GM12878 (cell line): ENCODE measurements at regions of chr5 and their contacts with region 1.

Region 1: DNA sequence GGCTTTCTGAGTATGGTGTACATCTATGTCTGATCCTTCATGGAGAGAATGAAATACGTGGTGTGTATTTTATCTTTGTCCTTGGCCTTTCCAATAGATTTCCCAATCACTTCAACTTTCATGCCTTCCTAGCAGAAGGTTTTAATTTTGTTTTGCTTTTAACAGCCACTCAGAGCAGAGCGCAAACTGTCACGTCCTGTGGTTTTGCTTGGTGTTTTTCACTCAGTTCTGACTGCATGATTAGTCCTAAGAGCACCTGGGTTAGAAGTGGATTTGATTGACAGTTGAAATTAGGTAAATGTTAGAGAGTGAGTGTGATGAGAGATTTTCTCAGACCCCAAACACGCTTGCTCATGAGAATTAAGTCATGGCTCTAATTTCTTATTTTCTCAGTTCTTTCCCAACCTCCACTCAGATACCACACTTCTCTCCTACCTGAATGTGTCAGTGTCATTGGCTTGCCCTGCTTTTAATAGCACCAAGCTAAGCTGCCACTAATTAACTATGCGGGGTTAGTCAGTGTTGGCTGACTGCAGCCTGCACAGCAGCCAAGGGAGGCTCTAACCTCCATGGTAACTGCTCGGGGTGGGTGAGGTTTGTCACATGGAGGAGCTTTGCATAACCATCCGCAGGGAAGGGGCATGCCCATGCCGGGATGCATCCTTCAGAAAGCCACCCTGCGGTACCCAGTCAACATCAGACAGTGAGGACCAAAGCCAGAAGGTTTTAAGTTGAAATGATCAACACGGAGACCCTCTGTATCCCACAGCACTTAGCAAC is 173.4 kb downstream of the NR3C1 start:
- DNase-seq: peak; percentile 99
- ATAC-seq: peak; percentile 89
- H3K4me3 ChIP-seq: peak overlapping the region; percentile 34; the same call in 1 of the 2 replicates
- H3K27ac ChIP-seq: peak overlapping the region; percentile 90
- H3K4me1 ChIP-seq: peaks cover 29% of the 10 kb centered on the region
- H3K27me3 ChIP-seq: no peaks in the 10 kb centered on the region
- CTCF ChIP-seq: no peak
- EP300 ChIP-seq: peak; percentile 74 to 88; a peak in 2 of 4 replicates
- POLR2A ChIP-seq: peak; percentile 56; the same call in 1 of the 2 replicates
- RAD21 ChIP-seq: peak; percentile 50; the same call in 1 of the 2 replicates

Region 2: DNA sequence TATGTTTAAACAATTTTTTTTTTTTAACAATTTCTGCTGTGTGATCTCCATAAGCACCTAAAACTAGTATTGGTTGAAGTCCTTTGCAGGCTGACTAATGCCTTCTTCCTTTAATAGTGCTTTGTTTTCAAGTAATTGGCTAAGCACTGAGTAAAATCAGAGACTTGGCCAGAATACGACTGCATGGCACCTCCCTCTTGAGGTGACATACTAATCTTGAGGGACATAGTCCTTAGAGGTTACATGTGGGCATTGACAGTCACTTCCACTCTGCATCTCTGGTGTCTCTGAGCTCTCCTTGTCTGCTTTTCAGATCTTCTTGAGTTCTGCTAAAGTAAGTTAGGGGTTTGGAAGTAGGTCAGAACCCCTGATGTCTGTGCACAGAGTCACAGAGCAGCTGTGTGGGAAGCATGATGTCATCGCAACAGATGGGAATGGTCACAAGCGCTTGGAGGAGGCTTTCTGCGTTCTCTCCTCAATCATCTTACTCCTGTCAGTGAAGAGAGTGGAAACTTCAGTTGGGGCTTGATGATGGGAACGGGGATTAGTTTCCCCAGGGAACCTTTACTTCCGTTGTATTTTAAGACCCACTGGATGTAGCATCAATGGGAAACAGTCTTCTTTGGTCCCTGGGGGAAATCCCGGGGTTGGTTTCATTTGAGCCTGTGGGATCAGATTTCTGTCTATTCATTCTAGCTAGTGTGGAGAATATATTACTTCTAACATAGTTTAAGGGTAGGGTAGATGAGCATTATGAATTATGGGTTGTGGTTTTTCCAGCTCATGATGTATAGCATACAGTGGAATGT is 323.0 kb before region 1 on chr5:
- CTCF ChIA-PET with region 1: no interaction called
- POLR2A ChIA-PET with region 1: no interaction called
- RAD21 ChIA-PET with region 1: no interaction called
- SMC1A ChIA-PET with region 1: no interaction called
- in situ Hi-C with region 1: no loop called
- intact Hi-C with region 1: no loop called
- DNase-seq: no peak
- ATAC-seq: no peak
- H3K4me3 ChIP-seq: no peak overlapping the region
- H3K27ac ChIP-seq: no peak overlapping the region
- H3K4me1 ChIP-seq: no peaks in the 10 kb centered on the region
- H3K27me3 ChIP-seq: no peaks in the 10 kb centered on the region
- CTCF ChIP-seq: no peak
- EP300 ChIP-seq: no peak
- POLR2A ChIP-seq: no peak
- RAD21 ChIP-seq: no peak

Region 3: DNA sequence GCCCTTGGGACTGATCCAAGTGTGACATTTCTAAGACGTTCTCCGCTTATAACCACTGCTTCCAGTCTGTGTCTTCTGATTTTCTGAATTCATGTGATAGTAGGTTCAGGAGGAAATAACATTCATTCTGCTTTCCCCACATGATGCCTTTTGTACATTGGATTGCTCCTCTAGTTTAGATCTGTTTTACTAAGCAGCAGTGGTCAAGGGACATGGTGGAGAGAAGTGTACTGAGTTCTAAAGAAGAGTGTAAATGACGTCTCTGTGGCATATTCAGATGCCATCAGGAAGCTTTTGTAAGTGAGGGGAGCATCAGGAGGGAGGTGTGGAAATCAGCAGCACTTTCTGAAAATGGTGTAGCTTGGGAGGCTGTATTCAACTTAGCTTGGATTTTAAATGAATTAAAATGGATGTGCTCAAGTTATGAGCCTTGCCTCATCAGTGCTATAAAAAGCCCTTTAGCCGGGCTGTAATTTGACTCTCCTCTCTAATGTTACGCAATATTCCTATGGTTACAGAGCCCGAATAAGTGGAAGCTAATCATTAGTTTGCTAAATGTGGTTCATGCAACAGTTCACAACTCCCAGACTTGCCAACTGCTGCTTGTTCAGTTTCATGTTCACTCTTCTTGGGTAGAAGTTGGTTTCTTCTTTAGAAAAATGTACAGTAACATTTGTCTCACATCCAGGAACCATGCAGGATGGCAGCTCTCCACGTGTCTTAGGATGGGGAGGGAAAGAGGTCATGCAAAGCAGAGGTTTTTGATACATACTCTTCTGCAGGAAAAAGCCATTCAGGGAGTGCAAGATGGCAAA is 178.6 kb before region 1 on chr5:
- CTCF ChIA-PET with region 1: no interaction called
- POLR2A ChIA-PET with region 1: interaction called, 3 read pairs
- RAD21 ChIA-PET with region 1: interaction called, 13 read pairs
- SMC1A ChIA-PET with region 1: interaction called, 3 read pairs
- in situ Hi-C with region 1: no loop called
- intact Hi-C with region 1: loop called (anchors 1 kb)
- DNase-seq: no peak
- ATAC-seq: peak; percentile 10
- H3K4me3 ChIP-seq: no peak overlapping the region
- H3K27ac ChIP-seq: no peak overlapping the region; the same call in 1 of the 2 replicates
- H3K4me1 ChIP-seq: peaks cover 38% of the 10 kb centered on the region
- H3K27me3 ChIP-seq: no peaks in the 10 kb centered on the region
- CTCF ChIP-seq: no peak
- EP300 ChIP-seq: no peak
- POLR2A ChIP-seq: no peak
- RAD21 ChIP-seq: no peak

Region 4: GRCh38 chr5:143195491-143195890 is 34.6 kb before region 1 on chr5:
- CTCF ChIA-PET with region 1: no interaction called
- POLR2A ChIA-PET with region 1: no interaction called
- RAD21 ChIA-PET with region 1: no interaction called
- SMC1A ChIA-PET with region 1: no interaction called
- in situ Hi-C with region 1: no loop called
- intact Hi-C with region 1: no loop called
- DNase-seq: no peak
- ATAC-seq: no peak
- H3K4me3 ChIP-seq: no peak overlapping the region
- H3K27ac ChIP-seq: no peak overlapping the region
- H3K4me1 ChIP-seq: no peaks in the 10 kb centered on the region
- H3K27me3 ChIP-seq: no peaks in the 10 kb centered on the region
- CTCF ChIP-seq: no peak
- EP300 ChIP-seq: no peak
- POLR2A ChIP-seq: no peak
- RAD21 ChIP-seq: no peak

Region 5: DNA sequence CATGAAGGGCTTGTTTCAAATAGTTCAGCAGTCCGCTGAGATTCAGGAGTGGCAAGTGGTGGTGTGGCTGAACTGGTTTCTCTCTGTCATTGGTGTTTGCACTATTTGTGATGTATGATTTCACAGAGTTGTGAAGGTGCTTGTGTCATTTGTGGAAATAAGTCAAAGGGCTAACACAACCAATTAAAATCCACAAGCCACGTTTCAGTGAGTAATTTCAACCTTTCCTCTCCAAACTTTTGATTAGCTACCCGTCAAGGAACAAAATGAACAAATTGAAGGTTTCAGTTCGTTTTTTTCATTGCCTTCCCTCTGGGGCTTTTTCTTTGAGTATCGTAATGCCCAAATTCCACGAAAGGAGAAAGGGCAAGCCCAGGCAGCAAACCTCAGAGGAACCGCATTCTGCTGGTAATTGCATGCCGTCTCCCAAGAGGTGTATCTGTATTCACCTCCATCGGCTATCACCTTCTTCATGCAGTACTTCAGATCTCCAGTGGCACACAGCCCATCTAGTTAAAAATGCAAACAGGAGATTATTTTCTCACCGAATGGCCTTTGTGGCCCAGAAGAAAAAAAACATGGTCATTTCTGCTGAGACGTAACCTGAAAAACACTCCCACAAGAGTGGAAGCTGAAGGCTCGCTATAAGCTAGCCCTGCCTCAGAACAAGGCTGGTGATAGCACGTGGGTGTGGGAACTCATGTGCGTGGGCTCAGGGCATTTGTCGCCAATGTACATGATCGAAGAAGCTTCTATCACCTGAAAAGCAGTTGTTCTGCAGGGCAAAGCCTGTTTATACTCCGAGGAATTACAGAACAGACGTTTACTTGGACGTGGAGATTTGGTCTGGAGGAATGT is 23.7 kb before region 1 on chr5:
- CTCF ChIA-PET with region 1: interaction called, 75 read pairs
- POLR2A ChIA-PET with region 1: interaction called, 114 read pairs
- RAD21 ChIA-PET with region 1: interaction called, 482 read pairs
- SMC1A ChIA-PET with region 1: interaction called, 423 read pairs
- in situ Hi-C with region 1: no loop called
- intact Hi-C with region 1: loop called (anchors 1 kb)
- DNase-seq: peak; percentile 98
- ATAC-seq: peak; percentile 71
- H3K4me3 ChIP-seq: peak overlapping the region; percentile 21; the same call in 1 of the 2 replicates
- H3K27ac ChIP-seq: peak overlapping the region; percentile 94
- H3K4me1 ChIP-seq: peaks cover 52% of the 10 kb centered on the region
- H3K27me3 ChIP-seq: no peaks in the 10 kb centered on the region
- CTCF ChIP-seq: peak in 1 of 3 experiments; percentile 13; a peak in 1 of 6 replicates
- EP300 ChIP-seq: peak; percentile 76 to 91; a peak in 2 of 4 replicates
- POLR2A ChIP-seq: peak; percentile 61; the same call in 1 of the 2 replicates
- RAD21 ChIP-seq: peak; percentile 40

Region 6: DNA sequence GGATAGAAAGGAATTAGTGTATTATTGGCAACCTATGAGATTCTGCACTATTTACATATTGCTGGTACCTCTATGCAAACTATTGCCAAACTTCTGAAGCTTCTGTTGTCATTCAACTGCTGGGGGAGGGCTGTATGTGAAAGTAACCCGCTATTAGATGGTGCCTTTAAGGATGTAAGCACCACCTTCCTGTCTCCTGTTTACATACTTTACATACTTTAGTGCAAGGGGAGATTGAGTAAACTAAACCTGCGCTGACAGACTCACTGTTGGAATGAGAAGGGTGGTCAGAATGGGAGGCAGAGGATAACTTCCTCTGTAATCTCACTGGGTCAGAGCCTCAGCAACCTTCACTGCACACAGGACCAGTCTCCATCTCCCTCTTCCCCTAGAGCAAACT is 49.6 kb after region 1 on chr5:
- CTCF ChIA-PET with region 1: interaction called, 6 read pairs
- POLR2A ChIA-PET with region 1: interaction called, 4 read pairs
- RAD21 ChIA-PET with region 1: interaction called, 18 read pairs
- SMC1A ChIA-PET with region 1: interaction called, 11 read pairs
- in situ Hi-C with region 1: no loop called
- intact Hi-C with region 1: loop called (anchors 5 kb)
- DNase-seq: no peak
- ATAC-seq: peak; percentile 22; the same call in 2 of the 3 replicates
- H3K4me3 ChIP-seq: no peak overlapping the region
- H3K27ac ChIP-seq: no peak overlapping the region
- H3K4me1 ChIP-seq: no peaks in the 10 kb centered on the region
- H3K27me3 ChIP-seq: no peaks in the 10 kb centered on the region
- CTCF ChIP-seq: no peak
- EP300 ChIP-seq: no peak
- POLR2A ChIP-seq: no peak
- RAD21 ChIP-seq: no peak

Region 7: DNA sequence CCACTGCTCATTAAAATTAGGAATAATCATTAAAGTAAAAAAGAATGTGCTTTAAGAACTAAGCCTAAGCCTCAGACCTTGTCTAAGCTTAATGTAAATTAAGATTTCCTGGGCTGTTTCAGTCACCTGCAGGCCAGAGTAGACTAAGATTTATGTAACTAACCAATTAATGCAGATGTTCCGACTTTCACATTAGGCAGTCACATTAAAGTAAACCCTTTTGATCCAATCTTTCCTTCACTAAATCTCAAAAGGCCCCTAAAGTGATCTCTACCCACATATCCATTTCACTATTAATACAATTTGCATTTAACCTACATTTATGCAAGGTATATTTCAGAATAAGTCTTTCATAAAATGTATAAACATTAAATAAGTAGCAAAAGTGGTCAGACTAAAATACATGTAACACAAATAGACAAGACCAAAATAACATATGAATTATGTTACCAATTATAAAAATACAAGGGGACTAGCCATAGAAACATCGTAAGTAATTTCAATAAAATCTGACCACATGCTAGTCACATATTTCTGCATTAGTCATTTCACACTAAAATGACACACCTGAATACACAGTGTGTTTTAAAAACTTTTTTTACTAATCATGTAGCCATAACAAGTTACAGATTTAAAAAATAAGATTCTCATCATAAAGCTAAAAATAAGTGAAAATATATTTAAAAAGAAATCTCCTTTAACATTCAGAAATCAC is 165.7 kb after region 1 on chr5:
- CTCF ChIA-PET with region 1: interaction called, 3 read pairs
- POLR2A ChIA-PET with region 1: interaction called, 14 read pairs
- RAD21 ChIA-PET with region 1: interaction called, 67 read pairs
- SMC1A ChIA-PET with region 1: interaction called, 25 read pairs
- in situ Hi-C with region 1: no loop called
- intact Hi-C with region 1: loop called (anchors 5 kb)
- DNase-seq: no peak
- ATAC-seq: peak; percentile 17
- H3K4me3 ChIP-seq: peak overlapping the region; percentile 83
- H3K27ac ChIP-seq: peak overlapping the region; percentile 93
- H3K4me1 ChIP-seq: no peaks in the 10 kb centered on the region
- H3K27me3 ChIP-seq: no peaks in the 10 kb centered on the region
- CTCF ChIP-seq: no peak
- EP300 ChIP-seq: peak; percentile 24 to 31; a peak in 1 of 4 replicates
- POLR2A ChIP-seq: no peak
- RAD21 ChIP-seq: no peak

Region 8: GRCh38 chr5:143605403-143606005 is 375.4 kb after region 1 on chr5:
- CTCF ChIA-PET with region 1: no interaction called
- POLR2A ChIA-PET with region 1: no interaction called
- RAD21 ChIA-PET with region 1: no interaction called
- SMC1A ChIA-PET with region 1: no interaction called
- in situ Hi-C with region 1: no loop called
- intact Hi-C with region 1: loop called (anchors 5 kb)
- DNase-seq: peak; percentile 60
- ATAC-seq: peak; percentile 68
- H3K4me3 ChIP-seq: no peak overlapping the region; the same call in 1 of the 2 replicates
- H3K27ac ChIP-seq: peak overlapping the region; percentile 69
- H3K4me1 ChIP-seq: peaks cover 22% of the 10 kb centered on the region
- H3K27me3 ChIP-seq: no peaks in the 10 kb centered on the region
- CTCF ChIP-seq: no peak
- EP300 ChIP-seq: peak in 1 of 2 experiments; percentile 40; a peak in 2 of 4 replicates
- POLR2A ChIP-seq: no peak
- RAD21 ChIP-seq: 0 out of 2 replicates have a peak, but pooled peaks have one; percentile 9